ENCODE measurements at regions of chr1 and their contacts with region 1.

Region 1: DNA sequence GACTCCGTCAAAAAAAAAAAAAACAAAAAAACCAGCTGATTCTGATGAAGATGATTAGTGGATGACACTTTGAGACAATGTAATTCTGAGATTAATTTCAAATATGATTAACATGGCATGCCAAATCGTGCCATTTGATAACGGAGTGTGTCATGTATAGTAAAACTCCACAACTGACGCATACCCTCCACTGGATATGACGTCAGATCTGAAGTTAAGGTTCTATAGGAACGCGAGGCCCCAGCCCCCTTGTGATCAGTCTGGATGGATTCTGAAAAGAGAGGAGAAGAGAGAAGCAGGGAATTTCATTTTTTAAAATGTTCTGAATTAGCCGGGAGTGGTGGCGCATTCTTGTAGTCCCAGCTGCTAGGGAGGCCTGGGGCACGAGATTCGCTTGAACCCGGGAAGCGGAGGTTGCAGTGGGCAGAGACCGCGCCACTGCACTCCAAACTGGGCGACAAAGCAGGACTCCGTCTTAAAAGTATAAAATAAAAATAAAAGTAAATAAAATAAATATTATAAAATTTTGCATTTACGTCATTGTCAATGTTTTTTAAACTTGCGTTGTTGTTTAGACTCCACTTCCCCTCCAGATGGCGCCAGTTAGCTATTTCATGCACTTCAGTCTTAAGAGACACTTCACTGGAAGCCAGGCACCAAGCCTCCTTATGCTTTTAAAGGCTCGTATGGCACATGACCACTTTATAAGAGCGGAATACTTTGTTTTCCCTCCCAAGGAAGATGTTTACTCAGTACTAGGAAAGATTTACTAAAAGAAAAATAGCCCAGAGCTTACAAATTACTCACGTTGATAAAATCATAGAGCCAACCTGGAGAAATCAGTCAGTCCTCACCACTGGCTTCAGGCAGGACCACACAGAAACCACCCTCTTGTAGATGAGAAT is 65.5 kb downstream of the UBE2U start:
- DNase-seq: peak; percentile 8
- ATAC-seq: peak; percentile 81
- H3K4me3 ChIP-seq: no peak overlapping the region
- H3K27ac ChIP-seq: no peak overlapping the region
- H3K4me1 ChIP-seq: no peaks in the 10 kb centered on the region
- H3K27me3 ChIP-seq: no peaks in the 10 kb centered on the region
- CTCF ChIP-seq: peak; percentile 60 to 77 (median 61)
- EP300 ChIP-seq: no peak
- POLR2A ChIP-seq: no peak
- RAD21 ChIP-seq: peak; percentile 91

Region 2: GRCh38 chr1:64396817-64397216 is 127.9 kb after region 1 on chr1:
- CTCF ChIA-PET with region 1: no interaction called
- POLR2A ChIA-PET with region 1: no interaction called
- RAD21 ChIA-PET with region 1: no interaction called
- SMC1A ChIA-PET with region 1: no interaction called
- in situ Hi-C with region 1: no loop called
- intact Hi-C with region 1: no loop called
- DNase-seq: no peak
- ATAC-seq: no peak
- H3K4me3 ChIP-seq: no peak overlapping the region
- H3K27ac ChIP-seq: no peak overlapping the region
- H3K4me1 ChIP-seq: no peaks in the 10 kb centered on the region
- H3K27me3 ChIP-seq: no peaks in the 10 kb centered on the region
- CTCF ChIP-seq: 0 out of 6 replicates have a peak, but pooled peaks of 1 of the 3 experiments have one; percentile 5
- EP300 ChIP-seq: no peak
- POLR2A ChIP-seq: no peak
- RAD21 ChIP-seq: no peak

Region 3: GRCh38 chr1:64574301-64574700 is 305.4 kb after region 1 on chr1:
- CTCF ChIA-PET with region 1: no interaction called
- POLR2A ChIA-PET with region 1: no interaction called
- RAD21 ChIA-PET with region 1: no interaction called
- SMC1A ChIA-PET with region 1: no interaction called
- in situ Hi-C with region 1: no loop called
- intact Hi-C with region 1: no loop called
- DNase-seq: no peak
- ATAC-seq: no peak
- H3K4me3 ChIP-seq: no peak overlapping the region
- H3K27ac ChIP-seq: no peak overlapping the region
- H3K4me1 ChIP-seq: no peaks in the 10 kb centered on the region
- H3K27me3 ChIP-seq: no peaks in the 10 kb centered on the region
- CTCF ChIP-seq: no peak
- EP300 ChIP-seq: no peak
- POLR2A ChIP-seq: no peak
- RAD21 ChIP-seq: no peak

Region 4: GRCh38 chr1:64675718-64676345 is 406.9 kb after region 1 on chr1:
- CTCF ChIA-PET with region 1: interaction called, 31 read pairs
- POLR2A ChIA-PET with region 1: interaction called, 3 read pairs
- RAD21 ChIA-PET with region 1: interaction called, 10 read pairs
- SMC1A ChIA-PET with region 1: interaction called, 6 read pairs
- in situ Hi-C with region 1: loop called (anchors 5 kb)
- intact Hi-C with region 1: loop called (anchors 1 kb)
- DNase-seq: no peak
- ATAC-seq: peak; percentile 40; the same call in 1 of the 3 replicates
- H3K4me3 ChIP-seq: no peak overlapping the region
- H3K27ac ChIP-seq: no peak overlapping the region
- H3K4me1 ChIP-seq: no peaks in the 10 kb centered on the region
- H3K27me3 ChIP-seq: no peaks in the 10 kb centered on the region
- CTCF ChIP-seq: peak; percentile 43 to 66 (median 47)
- EP300 ChIP-seq: no peak
- POLR2A ChIP-seq: no peak
- RAD21 ChIP-seq: peak; percentile 36

Region 5: GRCh38 chr1:64823691-64824476 is 555.0 kb after region 1 on chr1:
- CTCF ChIA-PET with region 1: interaction called, 18 read pairs
- POLR2A ChIA-PET with region 1: no interaction called
- RAD21 ChIA-PET with region 1: interaction called, 6 read pairs
- SMC1A ChIA-PET with region 1: interaction called, 3 read pairs
- in situ Hi-C with region 1: loop called (anchors 5 kb)
- intact Hi-C with region 1: loop called (anchors 1 kb)
- DNase-seq: peak; percentile 11
- ATAC-seq: peak; percentile 82
- H3K4me3 ChIP-seq: no peak overlapping the region
- H3K27ac ChIP-seq: no peak overlapping the region
- H3K4me1 ChIP-seq: peaks cover under 1% of the 10 kb centered on the region; the same call in 1 of the 2 replicates
- H3K27me3 ChIP-seq: no peaks in the 10 kb centered on the region
- CTCF ChIP-seq: peak; percentile 65 to 84 (median 78)
- EP300 ChIP-seq: no peak
- POLR2A ChIP-seq: no peak
- RAD21 ChIP-seq: peak; percentile 74

Region 6: GRCh38 chr1:65002508-65003315 is 733.8 kb after region 1 on chr1:
- CTCF ChIA-PET with region 1: no interaction called
- POLR2A ChIA-PET with region 1: no interaction called
- RAD21 ChIA-PET with region 1: no interaction called
- SMC1A ChIA-PET with region 1: no interaction called
- in situ Hi-C with region 1: no loop called
- intact Hi-C with region 1: loop called (anchors 5 kb)
- DNase-seq: no peak
- ATAC-seq: peak; percentile 91
- H3K4me3 ChIP-seq: peak overlapping the region; percentile 51
- H3K27ac ChIP-seq: no peak overlapping the region
- H3K4me1 ChIP-seq: peaks cover 15% of the 10 kb centered on the region
- H3K27me3 ChIP-seq: peaks cover 4 to 22% of the 10 kb centered on the region in 2 experiments
- CTCF ChIP-seq: no peak
- EP300 ChIP-seq: no peak
- POLR2A ChIP-seq: no peak
- RAD21 ChIP-seq: no peak

Region 7: DNA sequence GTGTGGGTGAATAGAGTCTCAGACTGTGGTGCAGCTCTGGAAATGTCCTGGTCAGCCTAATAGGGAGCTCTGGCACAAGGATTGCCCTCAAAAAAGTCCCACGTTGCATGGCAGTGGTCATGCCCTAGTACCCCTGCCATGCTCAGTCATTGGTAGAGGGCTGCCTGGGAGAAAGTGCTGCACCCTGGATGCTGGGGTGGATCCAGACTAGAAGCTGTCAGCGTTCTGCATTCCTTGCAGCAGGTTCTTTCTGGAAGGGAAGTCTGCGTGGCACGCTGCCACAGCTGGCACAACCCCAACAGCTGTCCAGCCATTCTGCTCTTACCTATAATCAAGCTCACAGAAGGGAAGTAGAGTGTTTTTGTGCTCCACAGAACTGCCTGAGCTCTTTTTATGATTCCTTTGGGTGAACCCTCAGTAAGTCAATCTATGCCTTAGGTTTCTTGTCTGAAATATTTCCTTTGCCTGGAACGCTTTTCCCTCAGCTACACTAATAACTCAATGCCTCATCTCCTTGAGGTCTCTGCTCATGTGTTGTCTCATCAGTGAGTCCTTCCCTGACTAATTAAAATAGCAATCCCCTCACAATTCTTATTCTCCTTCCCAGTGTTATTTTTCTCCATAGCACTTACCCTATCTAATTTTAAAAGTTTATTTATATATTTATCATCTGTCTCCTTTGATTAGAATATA is 758.9 kb after region 1 on chr1:
- CTCF ChIA-PET with region 1: no interaction called
- POLR2A ChIA-PET with region 1: no interaction called
- RAD21 ChIA-PET with region 1: no interaction called
- SMC1A ChIA-PET with region 1: no interaction called
- in situ Hi-C with region 1: loop called (anchors 25 kb)
- intact Hi-C with region 1: no loop called
- DNase-seq: no peak
- ATAC-seq: no peak
- H3K4me3 ChIP-seq: no peak overlapping the region
- H3K27ac ChIP-seq: no peak overlapping the region
- H3K4me1 ChIP-seq: no peaks in the 10 kb centered on the region
- H3K27me3 ChIP-seq: peaks cover 0 to 3% of the 10 kb centered on the region in 2 experiments; a peak in 3 of 4 replicates
- CTCF ChIP-seq: no peak
- EP300 ChIP-seq: no peak
- POLR2A ChIP-seq: no peak
- RAD21 ChIP-seq: no peak

Region 8: GRCh38 chr1:65075123-65075976 is 806.4 kb after region 1 on chr1:
- CTCF ChIA-PET with region 1: no interaction called
- POLR2A ChIA-PET with region 1: no interaction called
- RAD21 ChIA-PET with region 1: interaction called, 3 read pairs
- SMC1A ChIA-PET with region 1: no interaction called
- in situ Hi-C with region 1: no loop called
- intact Hi-C with region 1: loop called (anchors 5 kb)
- DNase-seq: no peak
- ATAC-seq: peak; percentile 95
- H3K4me3 ChIP-seq: no peak overlapping the region
- H3K27ac ChIP-seq: no peak overlapping the region
- H3K4me1 ChIP-seq: no peaks in the 10 kb centered on the region
- H3K27me3 ChIP-seq: no peaks in the 10 kb centered on the region; a peak in 1 of 4 replicates
- CTCF ChIP-seq: peak; percentile 72 to 84 (median 74)
- EP300 ChIP-seq: no peak
- POLR2A ChIP-seq: no peak
- RAD21 ChIP-seq: peak; percentile 67

Measured in GM12878 (cell line).